SK-MEL-5 (cell line): ENCODE measurements at regions of chr22 and their contacts with region 1.

Region 1: DNA sequence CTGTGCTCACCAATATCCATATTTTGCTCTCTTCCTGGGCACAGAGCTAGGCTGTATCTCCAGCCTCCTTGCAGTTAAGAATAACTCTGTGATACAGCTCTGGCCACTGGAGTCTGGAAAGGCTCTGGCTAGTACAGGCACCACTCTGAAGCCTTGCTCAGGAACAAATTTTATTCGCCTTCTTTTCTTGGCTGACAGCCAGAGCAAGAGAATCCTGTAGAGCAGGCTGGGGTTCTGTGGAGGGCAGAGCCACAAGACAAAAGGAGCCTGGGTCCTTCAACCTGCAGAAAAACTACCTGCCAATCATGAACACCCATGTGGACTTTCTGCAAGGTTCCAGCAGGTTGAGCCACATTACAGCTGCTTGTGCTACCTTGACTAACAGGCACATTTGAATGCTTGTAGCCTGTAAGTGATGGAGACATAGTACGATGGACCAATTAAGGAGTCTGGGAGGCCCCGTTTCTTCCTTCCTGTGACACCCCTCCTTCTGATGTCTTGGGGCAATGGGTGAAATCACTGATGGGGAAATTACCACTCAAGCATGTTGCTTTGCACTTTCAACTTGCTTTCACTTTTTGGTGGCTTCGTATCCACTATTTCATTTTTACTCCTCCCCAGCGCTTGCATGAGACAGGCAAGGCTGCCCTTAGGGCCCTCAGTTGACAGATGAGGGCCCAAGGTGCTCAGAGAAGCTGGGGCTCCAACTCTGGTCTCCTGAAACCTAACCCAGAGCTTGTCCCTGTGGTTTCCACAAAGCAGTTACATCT is 267.2 kb upstream of the SYN3 start:
- DNase-seq: no peak

Region 2: GRCh38 chr22:33579448-33580093 is 254.2 kb after region 1 on chr22:
- in situ Hi-C with region 1: loop called (anchors 25 kb)
- DNase-seq: peak; percentile 91